ENCODE measurements at regions of chr12 and their contacts with region 1.

Region 1: DNA sequence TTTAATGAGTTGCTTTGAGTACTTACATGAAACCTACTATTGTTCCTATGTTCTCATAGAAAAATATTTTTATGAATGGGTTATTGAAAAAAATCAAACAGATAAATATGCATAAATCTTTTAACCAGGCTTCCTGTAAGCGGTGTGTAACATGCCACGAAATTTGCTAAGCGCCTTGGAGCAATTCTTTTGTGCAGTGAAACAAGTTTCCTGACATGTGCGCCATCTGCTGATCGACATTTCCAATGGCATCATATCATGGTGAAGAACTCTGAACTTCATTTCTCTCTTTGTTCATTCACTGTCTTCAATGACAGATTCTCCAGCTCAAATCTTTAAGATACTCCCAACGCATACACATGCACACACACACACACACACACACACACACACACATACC is 145.6 kb upstream of the NAV3 start:
- ATAC-seq: peak; percentile 67 to 92 (median 84)
- H3K4me3 ChIP-seq: no peak overlapping the region
- H3K27ac ChIP-seq: no peak overlapping the region
- H3K4me1 ChIP-seq: peaks cover 0 to 8% of the 10 kb centered on the region in 2 donors

Region 2: DNA sequence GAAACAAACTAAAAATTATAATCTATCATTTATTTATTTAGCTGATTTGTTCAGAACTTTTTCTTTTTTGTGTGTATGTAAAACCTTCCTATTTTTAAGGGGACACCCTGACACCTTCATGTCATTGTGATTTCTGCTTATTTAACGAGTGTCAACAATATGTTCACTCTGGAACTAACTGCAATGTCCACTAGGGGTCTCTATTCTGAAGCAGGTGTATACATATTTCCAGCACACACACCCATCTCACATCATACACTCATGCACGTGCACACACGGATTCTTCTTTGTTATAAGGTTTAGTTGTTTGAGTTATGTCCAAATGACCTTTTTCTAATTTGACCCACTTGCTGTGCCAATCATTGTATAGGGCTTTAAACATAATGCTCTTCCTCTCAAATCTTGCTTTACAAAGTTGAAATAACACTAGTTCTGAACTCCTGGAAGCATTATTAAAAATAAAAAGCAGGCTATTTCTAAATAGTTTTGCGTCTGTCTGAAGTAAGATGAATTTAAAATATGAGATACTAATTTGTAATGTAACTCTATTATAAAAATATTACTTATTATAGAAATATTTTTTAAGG is 635.3 kb before region 1 on chr12:
- in situ Hi-C with region 1: loop called in 1 of 9 experiments (anchors 10 kb)
- ATAC-seq: peak; percentile 61 to 89 (median 74)
- H3K4me3 ChIP-seq: no peak overlapping the region
- H3K27ac ChIP-seq: no peak overlapping the region
- H3K4me1 ChIP-seq: peaks cover 0 to 12% of the 10 kb centered on the region in 2 donors

Region 3: DNA sequence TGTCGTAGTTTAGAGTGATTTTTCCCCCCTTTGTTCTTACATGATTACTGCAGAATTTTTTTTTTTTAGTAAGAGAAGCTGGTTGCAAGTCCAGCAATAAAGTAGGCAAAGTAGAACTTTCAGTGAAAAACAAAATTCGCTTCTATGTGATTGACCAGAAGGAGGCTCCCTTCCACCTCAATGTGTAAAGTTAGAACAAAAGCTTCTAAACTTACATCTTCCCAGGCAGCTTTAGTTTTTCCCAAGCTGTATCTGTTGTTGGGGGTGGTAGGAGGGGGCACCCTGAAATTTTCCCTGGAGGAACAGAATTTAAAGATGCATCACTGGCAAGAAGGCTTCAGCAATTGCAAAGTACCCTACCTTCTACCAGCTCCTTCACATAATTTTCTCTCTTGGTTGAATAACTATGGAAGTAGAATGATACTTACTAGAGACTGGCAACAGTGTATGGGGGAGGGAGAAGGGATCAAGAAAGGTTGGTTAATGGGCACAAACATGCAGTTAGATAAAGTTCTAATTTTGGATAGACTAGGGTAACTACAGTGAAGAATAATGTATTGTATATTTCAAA is 532.4 kb before region 1 on chr12:
- in situ Hi-C with region 1: loop called in 5 of 9 experiments (anchors 10 to 25 kb)
- ATAC-seq: peak in 6 of 8 experiments; percentile 31 to 56 (median 48)
- H3K4me3 ChIP-seq: no peak overlapping the region
- H3K27ac ChIP-seq: no peak overlapping the region
- H3K4me1 ChIP-seq: peaks cover 3% of the 10 kb centered on the region in 2 donors

Region 4: GRCh38 chr12:77324763-77325468 is 360.2 kb before region 1 on chr12:
- in situ Hi-C with region 1: loop called in 1 of 9 experiments (anchors 25 kb)
- ATAC-seq: peak; percentile 86 to 99 (median 90)
- H3K4me3 ChIP-seq: peak overlapping the region; percentile 54 to 89 (median 77)
- H3K27ac ChIP-seq: peak overlapping the region; percentile 75 to 81
- H3K4me1 ChIP-seq: peaks cover 25 to 37% of the 10 kb centered on the region in 2 donors